Calu3 (cell line): ENCODE measurements at regions of chr18 and their contacts with region 1.

Region 1: DNA sequence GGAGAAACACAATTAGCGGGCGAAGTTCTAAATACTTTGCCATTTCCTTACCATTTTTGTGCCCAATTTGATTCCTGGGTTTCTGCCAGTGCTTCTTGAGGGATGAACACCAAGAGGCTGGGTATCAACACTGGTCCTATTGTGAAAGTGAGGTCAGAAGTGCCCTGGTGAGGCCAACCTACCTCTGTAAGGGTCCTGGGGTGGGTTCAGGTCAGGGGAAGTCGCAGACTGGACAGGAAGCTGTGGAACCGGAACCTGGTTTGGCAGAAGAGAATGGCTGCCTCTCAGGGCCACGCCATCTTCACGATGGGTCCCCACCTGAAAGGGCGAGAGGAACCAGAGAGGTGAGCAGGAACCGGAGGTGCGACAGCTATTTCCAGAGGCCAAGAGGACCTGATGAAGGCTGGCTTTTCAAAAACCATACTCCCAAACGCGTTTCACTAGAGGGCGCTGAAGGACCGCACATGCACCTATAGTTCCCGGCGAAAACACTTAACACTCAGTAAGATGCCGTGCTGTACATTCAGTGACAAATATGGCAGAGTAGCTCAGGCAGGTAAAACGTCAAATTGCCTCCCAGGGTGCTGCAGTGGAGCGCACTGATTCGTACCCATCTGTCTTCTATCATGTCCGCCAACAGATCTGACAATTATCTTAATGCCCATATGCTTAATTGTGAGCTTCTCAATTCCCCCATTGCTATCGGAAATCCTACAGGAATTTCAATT is 275.3 kb upstream of the CCDC68 start:
- DNase-seq: peak; percentile 85
- H3K4me3 Mint-ChIP-seq: peak overlapping the region; percentile 73
- H3K27ac Mint-ChIP-seq: peak overlapping the region; percentile 82
- H3K4me1 Mint-ChIP-seq: peaks cover 9% of the 10 kb centered on the region
- H3K27me3 Mint-ChIP-seq: no peaks in the 10 kb centered on the region
- CTCF ChIP-seq: peak; percentile 92

Region 2: GRCh38 chr18:54946149-54946581 is 288.4 kb before region 1 on chr18:
- CTCF ChIA-PET with region 1: no interaction called
- intact Hi-C with region 1: no loop called
- DNase-seq: peak; percentile 85
- H3K4me3 Mint-ChIP-seq: peak overlapping the region; percentile 62
- H3K27ac Mint-ChIP-seq: peak overlapping the region; percentile 93
- H3K4me1 Mint-ChIP-seq: peaks cover 54% of the 10 kb centered on the region
- H3K27me3 Mint-ChIP-seq: no peaks in the 10 kb centered on the region
- CTCF ChIP-seq: no peak

Region 3: DNA sequence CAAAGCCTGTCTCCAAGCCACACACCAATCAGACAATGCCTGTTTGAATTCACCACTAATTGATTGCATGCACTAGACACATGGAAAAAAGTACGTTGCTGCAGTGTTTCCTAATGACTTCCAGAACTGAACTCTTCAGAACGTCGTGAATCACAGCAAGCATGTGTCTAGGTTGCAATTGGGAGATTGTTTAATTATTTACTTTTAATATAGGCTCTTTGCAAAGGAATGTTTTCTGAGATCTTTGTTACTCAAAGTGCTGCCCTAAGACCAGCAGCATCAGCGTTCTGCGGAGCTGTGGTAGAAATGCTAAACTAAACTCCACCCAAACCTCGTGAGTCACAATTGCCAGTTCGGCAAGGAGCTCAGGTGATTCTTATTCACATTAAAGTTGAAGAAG is 222.5 kb before region 1 on chr18:
- CTCF ChIA-PET with region 1: interaction called, 8 read pairs
- intact Hi-C with region 1: loop called (anchors 5 kb)
- DNase-seq: peak; percentile 64
- H3K4me3 Mint-ChIP-seq: peak overlapping the region; percentile 8
- H3K27ac Mint-ChIP-seq: peak overlapping the region; percentile 83
- H3K4me1 Mint-ChIP-seq: peaks cover 45% of the 10 kb centered on the region
- H3K27me3 Mint-ChIP-seq: no peaks in the 10 kb centered on the region
- CTCF ChIP-seq: no peak

Region 4: DNA sequence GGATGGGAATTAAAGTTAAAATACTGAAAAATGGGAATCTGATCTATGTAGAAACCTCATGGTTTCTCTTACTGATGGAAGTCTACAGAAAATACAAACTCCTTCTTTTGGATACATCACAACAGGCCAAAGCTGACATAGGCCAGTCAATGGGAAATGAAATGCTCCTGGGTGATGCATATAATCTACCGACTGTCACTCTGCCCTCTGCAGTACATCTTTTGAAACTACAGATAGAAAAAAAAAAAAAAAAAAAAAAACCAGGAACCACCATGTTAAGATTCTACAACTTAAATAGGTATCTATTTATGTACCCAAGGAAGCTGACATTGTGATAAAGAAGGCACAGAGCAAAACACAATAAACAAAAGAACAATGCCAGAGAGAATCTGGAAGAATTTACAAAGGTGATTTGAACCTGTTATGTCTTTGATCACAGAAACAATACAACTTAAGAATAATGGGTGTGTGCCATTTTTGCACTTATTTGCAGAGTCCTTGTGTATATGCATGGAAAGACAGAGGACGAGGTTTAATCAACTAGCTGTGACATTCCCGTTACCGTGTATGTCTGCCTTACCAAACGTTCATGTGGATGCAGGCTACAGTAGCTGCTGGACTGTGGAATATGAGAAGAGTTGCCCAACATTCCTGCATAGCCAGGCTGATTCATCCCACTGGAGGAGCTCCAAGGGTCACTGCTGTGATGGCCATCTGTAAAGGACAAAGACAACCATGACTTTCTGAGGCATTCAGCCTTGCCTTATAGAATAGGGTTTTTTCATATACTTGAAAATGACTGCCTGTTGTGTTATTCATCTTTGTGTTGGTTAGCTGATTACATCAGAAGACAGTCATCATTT is 40.7 kb after region 1 on chr18:
- CTCF ChIA-PET with region 1: interaction called, 9 read pairs
- intact Hi-C with region 1: loop called (anchors 1 kb)
- DNase-seq: no peak
- H3K4me3 Mint-ChIP-seq: no peak overlapping the region
- H3K27ac Mint-ChIP-seq: no peak overlapping the region
- H3K4me1 Mint-ChIP-seq: no peaks in the 10 kb centered on the region
- H3K27me3 Mint-ChIP-seq: no peaks in the 10 kb centered on the region
- CTCF ChIP-seq: no peak

Region 5: GRCh38 chr18:55322178-55322735 is 87.7 kb after region 1 on chr18:
- CTCF ChIA-PET with region 1: interaction called, 3 read pairs
- intact Hi-C with region 1: loop called (anchors 10 kb)
- DNase-seq: no peak
- H3K4me3 Mint-ChIP-seq: peak overlapping the region; percentile 45
- H3K27ac Mint-ChIP-seq: no peak overlapping the region
- H3K4me1 Mint-ChIP-seq: no peaks in the 10 kb centered on the region
- H3K27me3 Mint-ChIP-seq: peaks cover 7% of the 10 kb centered on the region
- CTCF ChIP-seq: no peak

Region 6: GRCh38 chr18:55405893-55406406 is 171.4 kb after region 1 on chr18:
- CTCF ChIA-PET with region 1: interaction called, 6 read pairs
- intact Hi-C with region 1: loop called (anchors 10 kb)
- DNase-seq: peak; percentile 62
- H3K4me3 Mint-ChIP-seq: no peak overlapping the region
- H3K27ac Mint-ChIP-seq: peak overlapping the region; percentile 27
- H3K4me1 Mint-ChIP-seq: peaks cover 9% of the 10 kb centered on the region
- H3K27me3 Mint-ChIP-seq: peaks cover 34% of the 10 kb centered on the region
- CTCF ChIP-seq: no peak

Region 7: GRCh38 chr18:55534547-55534946 is 300.0 kb after region 1 on chr18:
- CTCF ChIA-PET with region 1: no interaction called
- intact Hi-C with region 1: no loop called
- DNase-seq: no peak
- H3K4me3 Mint-ChIP-seq: no peak overlapping the region
- H3K27ac Mint-ChIP-seq: no peak overlapping the region
- H3K4me1 Mint-ChIP-seq: no peaks in the 10 kb centered on the region
- H3K27me3 Mint-ChIP-seq: no peaks in the 10 kb centered on the region
- CTCF ChIP-seq: no peak

Region 8: DNA sequence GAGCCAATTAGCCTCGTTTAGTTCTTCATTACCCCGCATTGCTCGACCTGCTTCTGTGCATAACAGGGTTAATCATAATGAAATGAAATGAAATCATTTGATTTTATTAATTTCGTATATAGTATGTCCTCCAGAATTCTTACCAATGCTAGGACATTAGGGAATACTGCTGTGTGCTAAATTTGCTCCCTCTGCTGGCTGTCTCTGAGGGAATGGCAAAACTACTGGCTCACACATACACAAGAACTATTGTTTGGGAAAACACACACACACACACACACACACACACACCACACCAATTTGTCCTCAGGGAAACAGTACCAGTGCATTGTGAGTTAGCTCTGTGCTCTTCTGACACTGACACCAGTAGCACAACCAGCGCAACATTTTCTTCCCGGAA is 626.7 kb after region 1 on chr18:
- CTCF ChIA-PET with region 1: no interaction called
- intact Hi-C with region 1: loop called (anchors 2 kb)
- DNase-seq: peak; percentile 29
- H3K4me3 Mint-ChIP-seq: no peak overlapping the region
- H3K27ac Mint-ChIP-seq: no peak overlapping the region
- H3K4me1 Mint-ChIP-seq: peaks cover 9% of the 10 kb centered on the region
- H3K27me3 Mint-ChIP-seq: peaks cover 8% of the 10 kb centered on the region
- CTCF ChIP-seq: no peak

Region 9: DNA sequence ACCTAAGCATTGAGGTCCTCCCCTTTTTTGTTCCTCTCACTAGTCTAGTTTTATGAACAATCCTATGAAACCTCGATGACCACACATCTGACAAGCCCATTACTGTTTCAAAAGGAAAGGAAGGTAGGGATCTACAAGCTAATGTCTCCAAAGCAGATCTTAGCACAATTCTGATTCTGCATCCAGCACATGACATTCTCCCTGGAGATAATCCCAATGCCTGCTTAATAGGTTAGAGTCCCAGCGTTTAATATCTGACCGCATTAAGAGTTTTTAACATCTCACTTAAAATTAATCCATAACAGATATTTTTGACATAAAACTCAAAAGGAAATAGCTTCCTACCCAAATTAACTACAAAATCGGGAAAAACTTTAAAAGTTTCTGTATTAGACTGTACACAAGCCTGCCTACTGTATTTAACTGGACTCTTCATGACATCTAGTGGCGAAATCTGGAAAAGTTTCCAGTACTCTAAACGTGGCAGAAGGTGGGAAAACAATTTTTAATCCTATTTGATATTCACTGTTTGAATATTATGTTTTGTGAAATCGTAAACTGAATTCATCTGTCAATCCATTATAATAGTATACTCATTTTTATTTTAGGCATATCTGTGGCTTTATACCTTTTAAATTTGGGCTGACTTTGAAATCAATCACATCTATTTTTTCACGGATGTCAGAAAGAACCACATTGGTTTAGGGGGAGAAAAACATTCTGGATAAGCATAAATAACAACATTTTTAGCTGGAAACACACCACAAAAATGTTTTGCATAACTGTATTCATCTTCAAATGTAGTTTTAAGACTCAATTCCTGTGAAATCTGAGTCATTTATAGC is 1341.5 kb after region 1 on chr18:
- CTCF ChIA-PET with region 1: no interaction called
- intact Hi-C with region 1: loop called (anchors 10 kb)
- DNase-seq: peak; percentile 40
- H3K4me3 Mint-ChIP-seq: no peak overlapping the region
- H3K27ac Mint-ChIP-seq: no peak overlapping the region
- H3K4me1 Mint-ChIP-seq: no peaks in the 10 kb centered on the region
- H3K27me3 Mint-ChIP-seq: no peaks in the 10 kb centered on the region
- CTCF ChIP-seq: peak; percentile 67